ENCODE measurements at regions of chr2 and their contacts with region 1.

Region 1: GRCh38 chr2:20326163-20326780 is 24.4 kb downstream of the PUM2 start:
- DNase-seq: peak; percentile 46
- H3K4me3 ChIP-seq: no peak overlapping the region
- H3K27ac ChIP-seq: no peak overlapping the region
- H3K4me1 ChIP-seq: peaks cover 4% of the 10 kb centered on the region
- H3K27me3 ChIP-seq: no peaks in the 10 kb centered on the region
- CTCF ChIP-seq: peak; percentile 89 to 91

Region 2: GRCh38 chr2:20225294-20226151 is 100.7 kb before region 1 on chr2:
- CTCF ChIA-PET with region 1: interaction called, 4 read pairs
- dilution Hi-C with region 1: no loop called
- in situ Hi-C with region 1: no loop called
- intact Hi-C with region 1: loop called (anchors 1 kb)
- DNase-seq: peak; percentile 85
- H3K4me3 ChIP-seq: peak overlapping the region; percentile 48 to 91 (median 72)
- H3K27ac ChIP-seq: peak overlapping the region; percentile 77
- H3K4me1 ChIP-seq: peaks cover 27% of the 10 kb centered on the region
- H3K27me3 ChIP-seq: no peaks in the 10 kb centered on the region
- CTCF ChIP-seq: peak in 1 of 2 donors; percentile 79

Region 3: DNA sequence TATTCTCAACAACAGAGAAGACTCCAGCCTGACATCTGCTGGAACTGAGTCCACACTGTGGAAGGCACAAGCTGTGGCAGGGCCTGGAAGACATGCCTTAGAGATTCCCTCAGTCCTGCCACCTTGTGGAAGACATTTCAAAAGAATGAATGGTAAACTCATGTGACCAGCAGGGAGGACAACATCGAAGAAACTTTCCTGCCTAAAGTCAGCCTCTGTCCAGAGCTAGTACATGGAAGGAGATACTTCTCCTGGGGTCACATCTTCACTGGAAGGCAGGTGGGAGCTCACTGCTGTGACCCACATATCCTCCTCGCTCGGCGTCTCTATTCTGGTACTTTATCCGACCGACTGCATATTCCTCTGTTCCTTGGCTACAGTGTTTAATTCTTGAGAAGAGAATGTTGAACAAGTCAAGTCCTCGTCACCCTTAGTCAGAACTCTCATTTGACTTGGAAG is 35.1 kb before region 1 on chr2:
- CTCF ChIA-PET with region 1: interaction called, 6 read pairs
- dilution Hi-C with region 1: no loop called
- in situ Hi-C with region 1: no loop called
- intact Hi-C with region 1: loop called (anchors 1 kb)
- DNase-seq: peak; percentile 80
- H3K4me3 ChIP-seq: no peak overlapping the region
- H3K27ac ChIP-seq: peak overlapping the region; percentile 27
- H3K4me1 ChIP-seq: peaks cover 19% of the 10 kb centered on the region
- H3K27me3 ChIP-seq: no peaks in the 10 kb centered on the region
- CTCF ChIP-seq: peak; percentile 79 to 82

Region 4: GRCh38 chr2:20350753-20351554 is 24.7 kb after region 1 on chr2 and contains the start of gene PUM2:
- CTCF ChIA-PET with region 1: no interaction called
- dilution Hi-C with region 1: no loop called
- in situ Hi-C with region 1: no loop called
- intact Hi-C with region 1: loop called (anchors 1 kb)
- DNase-seq: peak; percentile 97
- H3K4me3 ChIP-seq: peak within 1 kb of the TSS; percentile 90 to 94 (median 92)
- H3K27ac ChIP-seq: peak within 1 kb of the TSS; percentile 94
- H3K4me1 ChIP-seq: peaks cover 39% of the 10 kb centered on the region
- H3K27me3 ChIP-seq: no peaks in the 10 kb centered on the region
- CTCF ChIP-seq: no peak
- total RNA-seq, gene PUM2: 50.7 to 60.8 TPM

Region 5: DNA sequence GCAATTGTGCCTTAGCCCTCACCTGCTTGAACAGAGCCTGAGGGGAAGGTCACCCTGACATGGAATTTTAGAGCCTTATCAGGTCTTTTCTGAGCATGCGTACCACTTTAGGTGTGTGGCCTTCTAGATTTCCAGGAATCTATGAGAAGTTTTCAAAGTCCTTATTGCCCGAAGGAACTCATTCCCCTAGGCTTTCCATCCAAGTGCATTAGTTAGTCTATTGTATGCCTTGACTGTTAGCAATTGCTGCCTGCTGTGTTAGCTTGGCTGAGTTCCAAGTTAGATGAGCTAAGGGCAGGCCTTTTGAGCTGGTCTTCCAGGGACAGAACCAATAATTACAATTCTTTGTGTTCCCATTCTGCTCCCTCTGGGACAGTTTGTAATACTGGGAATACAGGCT is 55.2 kb after region 1 on chr2:
- CTCF ChIA-PET with region 1: interaction called, 3 read pairs
- dilution Hi-C with region 1: no loop called
- in situ Hi-C with region 1: no loop called
- intact Hi-C with region 1: loop called (anchors 2 kb)
- DNase-seq: peak; percentile 36
- H3K4me3 ChIP-seq: no peak overlapping the region
- H3K27ac ChIP-seq: no peak overlapping the region
- H3K4me1 ChIP-seq: peaks cover 3% of the 10 kb centered on the region
- H3K27me3 ChIP-seq: no peaks in the 10 kb centered on the region
- CTCF ChIP-seq: no peak

Region 6: GRCh38 chr2:20391951-20392699 is 65.9 kb after region 1 on chr2:
- CTCF ChIA-PET with region 1: interaction called, 30 read pairs
- dilution Hi-C with region 1: no loop called
- in situ Hi-C with region 1: no loop called
- intact Hi-C with region 1: loop called (anchors 2 kb)
- DNase-seq: peak; percentile 75
- H3K4me3 ChIP-seq: no peak overlapping the region
- H3K27ac ChIP-seq: no peak overlapping the region
- H3K4me1 ChIP-seq: peaks cover 8% of the 10 kb centered on the region
- H3K27me3 ChIP-seq: no peaks in the 10 kb centered on the region
- CTCF ChIP-seq: no peak

Region 7: DNA sequence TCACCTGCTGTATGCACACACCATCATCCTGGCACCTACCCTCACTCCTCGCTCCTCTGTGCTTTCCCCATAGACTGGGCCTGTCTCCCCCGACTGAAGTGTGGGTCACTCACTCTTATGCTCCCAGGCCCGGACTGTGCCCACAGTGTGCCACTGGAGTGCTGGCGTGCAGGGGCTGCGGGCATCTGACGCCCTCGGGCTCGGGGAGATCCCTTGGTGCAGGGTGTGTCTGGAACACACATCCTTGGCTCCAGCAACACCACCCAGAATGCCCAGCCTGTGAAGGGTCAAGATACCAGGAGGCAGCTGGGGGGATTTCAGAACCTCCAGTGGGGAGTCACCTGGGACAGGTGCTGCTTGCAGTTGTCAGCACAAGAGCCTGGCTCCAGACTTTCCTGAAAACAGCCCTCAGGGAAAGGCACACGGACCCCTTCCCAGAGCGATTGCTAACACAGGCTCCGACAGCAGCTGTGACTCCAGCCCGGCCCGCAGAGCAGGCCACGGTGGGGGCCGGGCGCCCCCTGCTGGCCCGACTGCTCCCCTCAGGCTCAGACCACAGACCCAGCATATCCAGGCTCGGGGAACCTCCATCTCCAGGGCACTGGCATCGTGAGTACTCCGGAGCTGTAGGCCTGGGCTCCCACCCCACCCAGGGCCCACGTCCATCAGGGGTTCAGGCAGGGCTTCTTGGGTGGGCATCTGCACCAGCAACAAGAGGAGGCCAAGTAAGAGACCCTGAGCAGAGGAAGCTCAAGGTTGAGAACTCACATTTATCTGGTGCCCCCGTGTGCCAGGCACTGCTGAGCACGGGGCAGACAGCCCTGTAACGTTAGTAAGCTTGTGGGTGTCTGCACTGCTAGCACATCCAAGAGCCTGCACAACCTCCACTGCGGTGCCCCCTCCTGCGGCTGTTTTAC is 316.0 kb after region 1 on chr2:
- CTCF ChIA-PET with region 1: no interaction called
- dilution Hi-C with region 1: no loop called
- in situ Hi-C with region 1: no loop called
- intact Hi-C with region 1: loop called (anchors 5 kb)
- DNase-seq: peak; percentile 62
- H3K4me3 ChIP-seq: no peak overlapping the region
- H3K27ac ChIP-seq: no peak overlapping the region
- H3K4me1 ChIP-seq: peaks cover 10% of the 10 kb centered on the region
- H3K27me3 ChIP-seq: no peaks in the 10 kb centered on the region
- CTCF ChIP-seq: peak; percentile 79 to 95

Measured in mammary epithelial cell (primary cell).